ENCODE measurements at regions of chr1 and their contacts with region 1.

Region 1: GRCh38 chr1:1132982-1133750 is 17.3 kb upstream of the C1orf159 start:
- DNase-seq: no peak

Region 2: DNA sequence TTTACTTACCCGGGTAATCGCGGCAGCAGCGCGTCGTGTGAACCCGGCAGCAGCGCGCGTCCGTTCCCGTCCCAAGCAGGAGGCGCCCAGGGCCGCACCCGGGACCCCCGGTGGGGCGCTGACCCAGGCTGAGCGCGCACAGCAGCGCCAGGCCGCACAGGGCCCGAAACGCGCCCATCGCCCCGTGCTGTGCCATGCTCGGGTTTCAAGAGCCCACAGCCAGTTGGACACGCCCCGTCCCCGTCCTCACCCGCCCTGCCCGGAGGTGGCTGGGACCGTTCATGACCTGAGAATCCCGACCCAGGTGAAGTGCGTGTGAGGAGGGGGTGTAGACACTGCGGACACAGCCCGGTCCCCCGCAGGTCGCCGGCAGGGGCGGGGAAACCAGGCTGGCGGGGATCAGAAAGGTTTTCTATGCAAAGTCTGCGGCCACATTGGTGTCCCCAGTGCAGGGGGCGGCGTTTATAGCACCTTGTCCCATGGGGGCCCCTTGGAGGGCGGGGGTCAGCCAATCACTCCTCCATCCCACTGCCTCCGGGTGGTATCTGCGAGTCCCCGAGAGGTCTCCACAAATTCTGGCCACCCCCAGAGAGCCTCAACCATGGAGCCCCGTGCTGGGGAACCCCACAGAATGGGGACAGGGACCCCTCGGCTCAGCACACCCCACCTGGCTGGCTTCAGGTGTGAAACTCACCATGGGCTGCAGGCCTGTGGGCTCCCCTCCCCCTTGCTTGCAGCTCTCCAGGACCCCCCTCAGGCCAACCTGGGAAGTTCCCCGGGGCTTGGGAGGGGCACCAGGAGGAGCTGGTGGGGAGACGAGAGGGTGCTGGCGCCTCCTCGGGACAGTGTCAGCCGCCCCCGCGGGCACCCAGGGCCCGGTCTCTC is 73.5 kb after region 1 on chr1 and contains the start of gene TNFRSF18:
- intact Hi-C with region 1: loop called (anchors 5 kb)
- DNase-seq: no peak
- total RNA-seq, gene TNFRSF18: 0.19 TPM